Activated naive CD4-positive, alpha-beta T cell treated with anti-CD3 and anti-CD28 coated beads, Interleukin-2, amount 10 ng/mL, durations not matched to agents 7 days and 5 days (primary cell): ENCODE measurements at regions of chr1 and their contacts with region 1.

Region 1: GRCh38 chr1:175154629-175155472 is 37.7 kb downstream of the KIAA0040 start:
- DNase-seq: peak; percentile 84
- H3K4me3 Mint-ChIP-seq: no peak overlapping the region
- H3K27ac Mint-ChIP-seq: no peak overlapping the region
- H3K4me1 Mint-ChIP-seq: peaks cover 12% of the 10 kb centered on the region
- H3K27me3 Mint-ChIP-seq: peaks cover 41% of the 10 kb centered on the region

Region 2: DNA sequence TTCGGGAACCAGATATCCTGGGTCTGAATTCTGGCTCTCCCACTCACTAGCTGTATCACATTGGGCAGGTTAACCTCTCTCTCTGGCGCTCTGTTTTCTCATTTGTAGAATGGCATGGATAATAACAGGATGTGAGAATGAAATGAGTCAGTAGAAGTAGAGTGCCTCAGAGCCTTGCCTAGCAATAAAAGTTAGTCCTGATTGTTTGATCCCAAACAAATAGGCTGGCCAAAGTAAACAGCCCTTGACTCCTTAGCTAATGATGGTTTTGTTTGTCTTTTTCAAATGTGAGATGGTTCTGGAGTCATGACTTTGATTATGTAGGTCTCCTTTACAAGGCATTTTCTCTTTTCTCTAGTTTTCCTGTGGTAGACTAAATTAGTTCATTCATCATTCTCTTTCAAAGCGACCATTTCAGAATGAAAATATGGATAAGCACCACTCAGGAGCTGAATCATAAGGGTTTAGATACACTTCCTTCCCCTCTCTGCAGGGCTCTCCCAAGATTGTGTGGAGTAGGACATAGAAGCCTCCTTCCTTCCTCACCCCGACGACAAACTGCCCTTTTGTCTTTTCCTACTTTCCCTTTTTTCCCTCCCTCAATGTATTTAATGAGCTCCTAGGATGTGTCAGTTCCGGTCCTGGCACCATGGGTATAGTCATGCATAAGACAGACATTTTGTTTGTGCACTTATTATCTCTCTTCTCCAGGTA is 14.6 kb after region 1 on chr1:
- CTCF ChIA-PET with region 1: interaction called, 13 read pairs
- DNase-seq: no peak
- H3K4me3 Mint-ChIP-seq: no peak overlapping the region
- H3K27ac Mint-ChIP-seq: peak overlapping the region; percentile 60
- H3K4me1 Mint-ChIP-seq: peaks cover 55% of the 10 kb centered on the region
- H3K27me3 Mint-ChIP-seq: no peaks in the 10 kb centered on the region

Region 3: GRCh38 chr1:175183586-175183985 is 28.7 kb after region 1 on chr1:
- CTCF ChIA-PET with region 1: interaction called, 10 read pairs
- DNase-seq: no peak
- H3K4me3 Mint-ChIP-seq: no peak overlapping the region
- H3K27ac Mint-ChIP-seq: peak overlapping the region; percentile 59
- H3K4me1 Mint-ChIP-seq: peaks cover 78% of the 10 kb centered on the region
- H3K27me3 Mint-ChIP-seq: no peaks in the 10 kb centered on the region

Region 4: GRCh38 chr1:175208773-175209492 is 54.1 kb after region 1 on chr1:
- CTCF ChIA-PET with region 1: interaction called, 14 read pairs
- DNase-seq: peak; percentile 76
- H3K4me3 Mint-ChIP-seq: peak overlapping the region; percentile 71
- H3K27ac Mint-ChIP-seq: peak overlapping the region; percentile 99
- H3K4me1 Mint-ChIP-seq: peaks cover 71% of the 10 kb centered on the region
- H3K27me3 Mint-ChIP-seq: no peaks in the 10 kb centered on the region

Region 5: GRCh38 chr1:175314300-175314699 is 159.4 kb after region 1 on chr1:
- CTCF ChIA-PET with region 1: interaction called, 293 read pairs
- DNase-seq: no peak
- H3K4me3 Mint-ChIP-seq: no peak overlapping the region
- H3K27ac Mint-ChIP-seq: no peak overlapping the region
- H3K4me1 Mint-ChIP-seq: peaks cover 1% of the 10 kb centered on the region
- H3K27me3 Mint-ChIP-seq: peaks cover 56% of the 10 kb centered on the region

Region 6: GRCh38 chr1:175338387-175339135 is 183.7 kb after region 1 on chr1:
- CTCF ChIA-PET with region 1: interaction called, 17 read pairs
- DNase-seq: peak; percentile 76
- H3K4me3 Mint-ChIP-seq: no peak overlapping the region
- H3K27ac Mint-ChIP-seq: no peak overlapping the region
- H3K4me1 Mint-ChIP-seq: no peaks in the 10 kb centered on the region
- H3K27me3 Mint-ChIP-seq: peaks cover 46% of the 10 kb centered on the region

Region 7: DNA sequence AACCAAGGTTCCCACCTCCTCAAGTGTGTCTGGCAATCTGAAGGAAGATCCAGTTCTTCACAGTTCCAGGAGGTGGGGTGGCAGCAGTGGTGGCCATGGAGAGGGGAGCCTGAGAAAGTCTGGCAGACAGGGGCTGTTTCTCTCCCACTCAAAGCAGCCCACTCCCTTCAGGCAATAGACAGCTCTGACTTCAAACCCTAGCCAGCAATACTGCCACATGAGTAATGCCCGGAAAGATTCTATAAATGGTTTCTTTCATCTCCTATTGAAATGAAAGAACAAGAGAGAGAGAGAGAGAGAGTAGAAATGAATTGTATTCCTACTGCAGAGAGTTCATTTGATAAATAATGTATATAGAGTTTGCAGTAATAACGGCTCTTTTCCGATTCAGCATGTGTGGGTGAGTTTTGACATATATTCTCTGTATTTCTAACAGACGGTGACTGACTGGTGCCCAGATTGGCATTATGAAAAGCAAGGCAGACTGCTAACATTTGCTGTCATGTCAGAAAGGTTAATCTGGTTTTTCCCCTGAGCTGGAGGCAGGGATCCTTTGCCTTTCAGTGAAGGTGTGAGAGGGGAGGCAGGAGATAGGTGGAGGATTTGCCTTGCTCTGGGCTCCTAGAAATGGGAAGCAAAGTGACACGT is 304.9 kb after region 1 on chr1:
- CTCF ChIA-PET with region 1: no interaction called
- DNase-seq: no peak
- H3K4me3 Mint-ChIP-seq: no peak overlapping the region
- H3K27ac Mint-ChIP-seq: no peak overlapping the region
- H3K4me1 Mint-ChIP-seq: no peaks in the 10 kb centered on the region
- H3K27me3 Mint-ChIP-seq: peaks cover 5% of the 10 kb centered on the region

Region 8: DNA sequence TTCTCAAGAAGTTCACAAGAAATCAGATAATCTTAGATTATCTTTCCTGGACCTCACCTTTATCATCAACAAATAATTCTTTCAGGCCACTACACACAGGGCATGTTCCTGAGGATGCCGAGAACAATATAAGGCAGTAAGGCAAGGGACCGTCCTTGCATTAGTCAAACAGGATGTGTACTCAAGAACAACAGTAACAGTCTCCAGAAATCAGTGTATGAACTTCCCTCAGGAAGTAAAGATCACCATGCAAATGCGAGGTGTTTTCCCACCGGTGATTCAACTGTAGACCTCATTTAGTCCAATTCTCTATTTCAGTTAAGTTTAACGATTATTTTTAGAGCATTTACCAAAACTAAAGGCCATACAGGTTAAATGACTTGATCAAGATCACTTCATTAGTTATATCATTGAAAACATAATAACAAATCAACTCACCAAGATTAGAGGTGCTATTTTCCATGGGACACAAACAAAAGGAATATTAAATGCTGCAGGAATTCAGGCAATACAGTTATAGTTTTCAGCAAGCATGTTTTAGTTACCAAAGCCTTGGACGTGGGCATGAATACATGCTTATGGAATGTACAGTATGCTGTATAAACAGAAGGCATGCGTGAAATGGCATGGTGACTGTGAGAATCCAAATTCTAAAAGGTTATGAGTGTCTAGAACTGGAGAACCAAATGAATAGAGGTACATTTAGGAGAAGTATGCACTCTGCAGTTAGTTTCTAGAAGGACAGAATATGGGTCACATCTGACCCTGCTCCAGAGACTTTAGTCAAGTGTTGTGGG is 443.3 kb after region 1 on chr1:
- CTCF ChIA-PET with region 1: no interaction called
- DNase-seq: no peak
- H3K4me3 Mint-ChIP-seq: no peak overlapping the region
- H3K27ac Mint-ChIP-seq: no peak overlapping the region
- H3K4me1 Mint-ChIP-seq: peaks cover 4% of the 10 kb centered on the region
- H3K27me3 Mint-ChIP-seq: peaks cover 28% of the 10 kb centered on the region